PC-3 (cell line): ENCODE measurements at regions of chr1 and their contacts with region 1.

Region 1: GRCh38 chr1:156356875-156357534 is 12.0 kb upstream of the RHBG start:
- DNase-seq: peak; percentile 94
- ATAC-seq: peak; percentile 97
- H3K4me3 ChIP-seq: peak overlapping the region; percentile 39; the same call in 1 of the 2 replicates
- H3K27ac ChIP-seq: no peak overlapping the region
- H3K4me1 ChIP-seq: no peaks in the 10 kb centered on the region
- H3K27me3 ChIP-seq: no peaks in the 10 kb centered on the region
- CTCF ChIP-seq: peak; percentile 99

Region 2: GRCh38 chr1:156113282-156113950 is 243.6 kb before region 1 on chr1:
- CTCF ChIA-PET with region 1: no interaction called
- POLR2A ChIA-PET with region 1: no interaction called
- intact Hi-C with region 1: no loop called
- DNase-seq: no peak
- ATAC-seq: no peak
- H3K4me3 ChIP-seq: peak overlapping the region; percentile 86; the same call in 1 of the 2 replicates
- H3K27ac ChIP-seq: peak overlapping the region; percentile 91
- H3K4me1 ChIP-seq: peaks cover 37% of the 10 kb centered on the region
- H3K27me3 ChIP-seq: no peaks in the 10 kb centered on the region
- CTCF ChIP-seq: no peak

Region 3: GRCh38 chr1:156226116-156226538 is 130.9 kb before region 1 on chr1:
- CTCF ChIA-PET with region 1: no interaction called
- POLR2A ChIA-PET with region 1: no interaction called
- intact Hi-C with region 1: no loop called
- DNase-seq: no peak
- ATAC-seq: no peak
- H3K4me3 ChIP-seq: no peak overlapping the region
- H3K27ac ChIP-seq: no peak overlapping the region
- H3K4me1 ChIP-seq: peaks cover 12% of the 10 kb centered on the region
- H3K27me3 ChIP-seq: no peaks in the 10 kb centered on the region
- CTCF ChIP-seq: no peak

Region 4: DNA sequence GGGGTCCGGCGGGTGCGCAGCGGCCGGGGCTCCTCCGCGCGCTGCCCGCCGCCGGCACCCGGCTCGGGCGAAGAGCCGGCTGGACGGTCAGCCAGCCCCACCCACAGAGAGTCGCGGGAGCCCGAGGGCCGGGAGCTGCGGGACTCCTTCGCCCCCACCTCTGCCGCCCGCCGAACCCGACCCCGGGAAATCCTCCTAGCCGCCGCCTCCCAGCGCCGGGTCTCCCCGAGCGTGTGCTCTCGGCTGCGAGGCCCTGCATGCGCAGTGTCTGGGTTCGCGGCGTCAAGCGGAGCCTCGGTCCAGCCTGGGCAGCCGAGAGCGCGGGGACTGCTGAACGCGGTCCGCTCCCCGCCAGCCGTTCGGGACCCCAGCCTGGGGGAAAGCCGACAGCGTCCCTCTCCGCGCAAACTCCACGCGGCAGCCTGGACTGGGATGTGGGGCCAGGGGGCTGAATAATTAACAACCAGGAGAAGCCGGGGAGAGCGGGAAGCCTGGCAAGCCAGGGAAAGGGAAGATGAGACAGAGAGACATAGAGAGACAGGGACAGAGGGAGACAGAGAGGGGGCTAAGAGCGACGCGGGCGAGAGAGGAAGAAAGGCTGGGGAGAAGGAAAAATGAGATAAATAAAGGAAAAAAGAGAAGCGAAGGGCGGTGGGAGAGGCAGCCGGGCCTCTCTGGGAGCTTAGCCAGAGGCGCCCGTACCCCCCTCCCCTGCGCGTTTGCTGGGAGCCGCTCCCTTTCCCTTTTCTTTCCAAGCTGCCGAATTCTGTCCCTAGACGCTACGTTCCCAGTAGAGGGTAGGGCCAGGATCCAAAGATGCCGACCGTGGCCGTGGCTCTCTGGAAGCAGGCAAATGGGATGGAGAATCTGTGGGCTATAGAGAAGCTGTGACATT is 79.4 kb after region 1 on chr1:
- CTCF ChIA-PET with region 1: no interaction called
- POLR2A ChIA-PET with region 1: interaction called, 16 read pairs
- intact Hi-C with region 1: no loop called
- DNase-seq: no peak
- ATAC-seq: no peak
- H3K4me3 ChIP-seq: no peak overlapping the region
- H3K27ac ChIP-seq: no peak overlapping the region
- H3K4me1 ChIP-seq: no peaks in the 10 kb centered on the region
- H3K27me3 ChIP-seq: peaks cover 97% of the 10 kb centered on the region
- CTCF ChIP-seq: no peak

Region 5: GRCh38 chr1:156492591-156493080 is 135.6 kb after region 1 on chr1:
- CTCF ChIA-PET with region 1: no interaction called
- POLR2A ChIA-PET with region 1: no interaction called
- intact Hi-C with region 1: no loop called
- DNase-seq: no peak
- ATAC-seq: no peak
- H3K4me3 ChIP-seq: no peak overlapping the region
- H3K27ac ChIP-seq: no peak overlapping the region
- H3K4me1 ChIP-seq: peaks cover 31% of the 10 kb centered on the region
- H3K27me3 ChIP-seq: no peaks in the 10 kb centered on the region
- CTCF ChIP-seq: no peak

Region 6: DNA sequence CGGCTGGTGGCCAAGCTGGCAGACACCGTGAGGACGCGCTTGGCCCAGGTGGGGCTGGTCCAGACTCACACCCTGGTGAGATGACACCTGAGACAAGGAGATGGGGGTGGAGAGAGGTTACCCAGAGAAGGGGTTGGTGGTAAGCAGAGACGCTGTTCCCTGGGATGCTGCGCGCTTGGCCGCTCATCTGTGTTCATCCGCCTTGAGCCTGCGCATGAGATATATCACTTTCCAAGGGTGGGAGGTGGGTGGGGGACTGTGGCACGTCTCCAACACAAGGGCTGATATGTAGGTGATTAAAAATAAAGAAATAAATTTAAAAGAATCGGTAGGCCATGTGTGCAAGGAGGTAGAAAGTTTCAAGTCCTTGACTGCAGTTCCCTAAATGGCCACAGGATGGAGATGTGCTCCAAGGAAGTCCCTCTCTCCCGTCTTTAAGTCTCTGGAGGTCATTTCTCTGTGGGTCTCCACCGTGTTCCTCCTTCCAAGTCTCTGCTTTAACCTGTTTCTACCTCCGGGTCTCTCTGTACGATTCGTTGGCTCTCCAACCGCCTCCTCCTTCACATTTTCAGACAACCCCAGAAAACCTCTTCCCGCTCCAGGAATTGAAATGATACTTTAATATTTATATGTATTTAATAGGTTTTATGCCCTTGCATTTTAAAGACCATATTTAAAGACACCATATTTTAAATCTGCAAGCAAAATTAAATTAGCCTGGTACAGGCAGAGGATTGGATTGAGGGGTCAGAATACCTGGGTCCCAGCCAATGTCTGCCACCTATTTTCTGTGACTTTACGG is 227.0 kb after region 1 on chr1:
- CTCF ChIA-PET with region 1: no interaction called
- POLR2A ChIA-PET with region 1: no interaction called
- intact Hi-C with region 1: no loop called
- DNase-seq: peak; percentile 95
- ATAC-seq: peak; percentile 74
- H3K4me3 ChIP-seq: no peak overlapping the region
- H3K27ac ChIP-seq: no peak overlapping the region
- H3K4me1 ChIP-seq: no peaks in the 10 kb centered on the region
- H3K27me3 ChIP-seq: no peaks in the 10 kb centered on the region
- CTCF ChIP-seq: peak; percentile 88